Transverse colon (tissue), 4 donors: ENCODE measurements at regions of chr15 and their contacts with region 1.

Region 1: GRCh38 chr15:88571153-88571851 is 24.8 kb upstream of the DET1 start:
- DNase-seq: no peak
- H3K4me3 ChIP-seq: no peak overlapping the region
- H3K27ac ChIP-seq: no peak overlapping the region
- H3K4me1 ChIP-seq: no peaks in the 10 kb centered on the region
- H3K27me3 ChIP-seq: no peaks in the 10 kb centered on the region
- CTCF ChIP-seq: no peak
- EP300 ChIP-seq: no peak
- POLR2A ChIP-seq: no peak

Region 2: GRCh38 chr15:88498996-88499395 is 72.3 kb before region 1 on chr15:
- in situ Hi-C with region 1: no loop called
- intact Hi-C with region 1: no loop called
- DNase-seq: no peak
- H3K4me3 ChIP-seq: no peak overlapping the region
- H3K27ac ChIP-seq: no peak overlapping the region
- H3K4me1 ChIP-seq: no peaks in the 10 kb centered on the region
- H3K27me3 ChIP-seq: no peaks in the 10 kb centered on the region
- CTCF ChIP-seq: no peak
- EP300 ChIP-seq: no peak
- POLR2A ChIP-seq: no peak

Region 3: DNA sequence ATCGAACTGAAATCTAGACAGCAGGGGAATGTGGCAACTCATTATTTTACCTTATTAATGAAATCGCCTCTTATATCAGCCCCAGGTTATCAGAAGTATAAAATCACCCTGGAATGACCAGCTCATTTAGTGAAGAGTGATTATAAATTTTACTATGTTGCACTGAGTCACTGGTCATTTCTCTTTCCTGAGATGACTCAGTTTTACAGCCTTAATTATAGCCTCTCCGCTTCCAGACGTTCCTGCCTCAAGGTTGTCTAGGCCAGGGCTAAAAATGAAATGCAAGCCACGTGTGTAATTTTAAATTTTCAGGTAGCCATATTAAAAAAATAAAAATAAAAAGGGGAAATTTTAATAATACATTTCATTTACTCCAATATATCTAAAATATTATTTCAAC is 58.1 kb before region 1 on chr15:
- in situ Hi-C with region 1: no loop called
- intact Hi-C with region 1: loop called (anchors 1 kb)
- DNase-seq: no peak
- H3K4me3 ChIP-seq: no peak overlapping the region
- H3K27ac ChIP-seq: no peak overlapping the region
- H3K4me1 ChIP-seq: peaks cover 0 to 4% (median 0%) of the 10 kb centered on the region in 4 donors
- H3K27me3 ChIP-seq: no peaks in the 10 kb centered on the region
- CTCF ChIP-seq: no peak
- EP300 ChIP-seq: no peak
- POLR2A ChIP-seq: no peak